Heart left ventricle (tissue), 16 donors: ENCODE measurements at regions of chr2 and their contacts with region 1.

Region 1: DNA sequence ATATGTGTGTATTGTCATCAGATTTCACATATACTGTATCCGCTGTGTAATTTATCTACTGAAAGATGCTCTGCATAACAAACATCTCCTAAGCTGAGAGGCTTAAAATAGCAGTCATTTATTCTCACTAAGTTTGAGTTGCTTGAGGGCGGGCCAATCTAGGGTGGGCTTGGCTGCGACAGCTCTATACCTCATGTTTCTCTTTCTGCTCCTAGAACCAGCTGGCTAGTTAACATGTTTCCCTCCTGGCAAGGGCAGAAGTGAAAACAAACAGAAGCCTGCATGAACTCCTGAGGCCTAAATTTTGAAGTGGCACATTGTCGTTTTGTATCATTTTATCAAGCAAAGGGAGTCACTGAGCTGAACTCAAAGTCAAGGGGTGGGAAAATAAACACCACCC is 585.0 kb upstream of the VRK2 start:
- DNase-seq: no peak
- ATAC-seq: no peak
- H3K4me3 ChIP-seq: no peak overlapping the region
- H3K27ac ChIP-seq: no peak overlapping the region
- H3K4me1 ChIP-seq: no peaks in the 10 kb centered on the region
- H3K27me3 ChIP-seq: no peaks in the 10 kb centered on the region
- CTCF ChIP-seq: no peak
- POLR2A ChIP-seq: no peak

Region 2: GRCh38 chr2:57107353-57107752 is 354.3 kb before region 1 on chr2:
- intact Hi-C with region 1: no loop called
- DNase-seq: no peak
- ATAC-seq: no peak
- H3K4me3 ChIP-seq: no peak overlapping the region
- H3K27ac ChIP-seq: no peak overlapping the region
- H3K4me1 ChIP-seq: no peaks in the 10 kb centered on the region
- H3K27me3 ChIP-seq: no peaks in the 10 kb centered on the region
- CTCF ChIP-seq: no peak
- POLR2A ChIP-seq: no peak

Region 3: GRCh38 chr2:57448816-57449215 is 12.8 kb before region 1 on chr2:
- intact Hi-C with region 1: loop called in 1 of 10 experiments (anchors 2 kb)
- DNase-seq: no peak
- ATAC-seq: no peak
- H3K4me3 ChIP-seq: no peak overlapping the region
- H3K27ac ChIP-seq: no peak overlapping the region
- H3K4me1 ChIP-seq: no peaks in the 10 kb centered on the region
- H3K27me3 ChIP-seq: no peaks in the 10 kb centered on the region
- CTCF ChIP-seq: no peak
- POLR2A ChIP-seq: no peak